MCF 10A (cell line): ENCODE measurements at regions of chr5 and their contacts with region 1.

Region 1: GRCh38 chr5:139341650-139342422 is at the start of gene PAIP2:
- DNase-seq: peak; percentile 99
- H3K4me3 Mint-ChIP-seq: peak within 1 kb of the TSS; percentile 97
- H3K27ac Mint-ChIP-seq: peak within 1 kb of the TSS; percentile 100
- H3K4me1 Mint-ChIP-seq: peaks cover 20% of the 10 kb centered on the region
- H3K27me3 Mint-ChIP-seq: no peaks in the 10 kb centered on the region
- CTCF ChIP-seq: peak; percentile 85
- total RNA-seq, gene PAIP2: 104 and 108 TPM in 2 replicates

Region 2: DNA sequence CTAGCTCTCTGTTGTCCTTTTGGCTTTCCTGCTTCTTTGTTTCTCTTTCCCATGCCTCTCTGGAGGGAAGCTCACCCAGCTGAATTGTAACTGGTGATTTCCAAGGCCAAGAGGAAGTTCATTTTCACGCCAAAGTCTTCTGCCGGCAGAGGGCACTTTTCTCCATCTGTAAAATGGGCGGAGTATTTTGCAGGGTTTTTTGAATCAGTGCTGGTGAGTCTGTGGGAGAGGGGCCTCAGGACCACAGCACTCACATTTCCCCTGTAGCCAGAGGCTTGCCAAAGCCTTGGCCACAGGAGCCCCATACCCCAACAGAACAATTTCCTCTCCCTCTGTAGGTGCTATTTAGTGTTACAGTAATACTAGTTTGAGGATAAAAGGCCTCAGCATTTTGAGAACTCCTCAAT is 90.6 kb before region 1 on chr5:
- CTCF ChIA-PET with region 1: no interaction called
- POLR2A ChIA-PET with region 1: no interaction called
- intact Hi-C with region 1: no loop called
- DNase-seq: no peak
- H3K4me3 Mint-ChIP-seq: no peak overlapping the region
- H3K27ac Mint-ChIP-seq: no peak overlapping the region
- H3K4me1 Mint-ChIP-seq: peaks cover 5% of the 10 kb centered on the region
- H3K27me3 Mint-ChIP-seq: no peaks in the 10 kb centered on the region
- CTCF ChIP-seq: peak; percentile 20

Region 3: DNA sequence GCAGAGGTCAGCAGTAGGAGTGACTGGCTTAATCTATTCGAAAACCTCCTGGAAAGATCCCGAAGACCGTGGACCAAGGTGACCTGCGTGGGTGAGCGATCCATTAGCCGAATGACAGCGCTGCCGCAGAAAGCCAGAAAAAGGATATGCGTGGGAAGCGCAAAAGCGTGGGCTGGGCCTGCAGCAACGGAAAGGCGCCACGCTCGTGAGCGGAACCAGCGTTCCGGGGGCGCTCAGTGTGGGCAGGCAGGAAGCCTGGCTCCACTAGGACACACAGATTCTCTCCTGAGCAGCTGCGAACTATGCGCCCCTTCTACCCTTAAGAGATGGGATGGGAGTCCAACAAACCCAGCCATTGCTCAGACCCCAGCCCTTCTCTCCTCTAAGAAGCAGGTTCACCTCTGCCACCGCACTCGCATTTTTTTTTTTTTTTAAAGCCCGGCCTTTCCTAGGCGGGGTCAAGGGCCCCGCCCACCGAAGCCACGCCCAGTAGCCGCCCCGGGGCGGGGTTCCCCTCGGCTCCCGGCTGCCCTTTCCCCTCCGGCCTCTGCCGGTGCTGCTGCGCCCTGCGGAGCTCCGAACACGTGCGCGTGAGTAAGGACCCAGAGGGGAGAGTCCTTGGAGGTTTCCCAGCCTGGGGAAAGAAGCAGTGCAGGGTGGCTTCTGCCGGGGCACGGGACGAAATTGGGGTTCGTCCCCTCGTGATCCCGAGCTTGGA is 68.1 kb before region 1 on chr5:
- CTCF ChIA-PET with region 1: interaction called, 3 read pairs
- POLR2A ChIA-PET with region 1: interaction called, 52 read pairs
- intact Hi-C with region 1: no loop called
- DNase-seq: peak; percentile 95
- H3K4me3 Mint-ChIP-seq: peak overlapping the region; percentile 74
- H3K27ac Mint-ChIP-seq: peak overlapping the region; percentile 65
- H3K4me1 Mint-ChIP-seq: peaks cover 49% of the 10 kb centered on the region
- H3K27me3 Mint-ChIP-seq: no peaks in the 10 kb centered on the region
- CTCF ChIP-seq: peak; percentile 10

Region 4: GRCh38 chr5:139293504-139294373 is 48.1 kb before region 1 on chr5 and contains the start of gene MATR3:
- CTCF ChIA-PET with region 1: interaction called, 8 read pairs
- POLR2A ChIA-PET with region 1: interaction called, 107 read pairs
- intact Hi-C with region 1: loop called (anchors 2 kb)
- DNase-seq: peak; percentile 98
- H3K4me3 Mint-ChIP-seq: peak within 1 kb of the TSS; percentile 94
- H3K27ac Mint-ChIP-seq: peak within 1 kb of the TSS; percentile 99
- H3K4me1 Mint-ChIP-seq: peaks cover 37% of the 10 kb centered on the region
- H3K27me3 Mint-ChIP-seq: no peaks in the 10 kb centered on the region
- CTCF ChIP-seq: no peak
- total RNA-seq, gene MATR3: 152 and 159 TPM in 2 replicates

Region 5: GRCh38 chr5:139312075-139312474 is 29.8 kb before region 1 on chr5:
- CTCF ChIA-PET with region 1: interaction called, 6 read pairs
- POLR2A ChIA-PET with region 1: interaction called, 30 read pairs
- intact Hi-C with region 1: no loop called
- DNase-seq: no peak
- H3K4me3 Mint-ChIP-seq: no peak overlapping the region
- H3K27ac Mint-ChIP-seq: peak overlapping the region; percentile 12
- H3K4me1 Mint-ChIP-seq: peaks cover 42% of the 10 kb centered on the region
- H3K27me3 Mint-ChIP-seq: no peaks in the 10 kb centered on the region
- CTCF ChIP-seq: no peak

Region 6: DNA sequence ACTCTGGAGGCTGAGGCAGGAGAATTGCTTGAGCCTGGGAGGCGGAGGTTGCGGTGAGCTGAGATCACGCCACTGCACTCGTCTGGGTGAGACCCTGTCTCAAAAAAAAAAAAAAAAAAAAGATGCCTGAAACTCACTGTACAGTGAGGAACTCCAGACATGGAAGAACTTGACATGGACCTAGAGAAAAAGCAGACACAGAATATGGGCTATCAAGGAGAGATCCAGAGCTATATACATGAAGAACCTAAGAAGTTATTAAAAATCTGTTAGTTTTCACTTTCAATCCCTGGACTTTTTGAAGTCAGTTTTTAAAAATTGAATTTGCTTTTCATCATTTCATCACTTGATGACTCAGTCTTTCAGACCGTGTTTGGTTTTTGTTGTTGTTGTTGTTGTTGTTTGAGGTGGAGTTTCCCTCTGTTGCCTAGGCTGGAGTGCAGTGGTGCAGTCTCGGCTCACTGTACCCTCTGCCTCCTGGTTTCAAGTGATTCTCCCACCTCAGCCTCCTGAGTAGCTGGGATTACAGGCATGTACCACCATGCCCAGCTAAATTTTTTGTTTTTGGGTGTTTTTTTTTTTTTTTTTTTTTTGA is 20.1 kb after region 1 on chr5:
- CTCF ChIA-PET with region 1: interaction called, 7 read pairs
- POLR2A ChIA-PET with region 1: interaction called, 16 read pairs
- intact Hi-C with region 1: no loop called
- DNase-seq: no peak
- H3K4me3 Mint-ChIP-seq: no peak overlapping the region
- H3K27ac Mint-ChIP-seq: no peak overlapping the region
- H3K4me1 Mint-ChIP-seq: peaks cover 15% of the 10 kb centered on the region
- H3K27me3 Mint-ChIP-seq: no peaks in the 10 kb centered on the region
- CTCF ChIP-seq: no peak

Region 7: GRCh38 chr5:139403787-139404483 is 62.1 kb after region 1 on chr5 and contains the start of gene SPATA24:
- CTCF ChIA-PET with region 1: interaction called, 5 read pairs
- POLR2A ChIA-PET with region 1: interaction called, 21 read pairs
- intact Hi-C with region 1: loop called (anchors 2 kb)
- DNase-seq: peak; percentile 99
- H3K4me3 Mint-ChIP-seq: peak within 1 kb of the TSS; percentile 97
- H3K27ac Mint-ChIP-seq: peak within 1 kb of the TSS; percentile 99
- H3K4me1 Mint-ChIP-seq: peaks cover 23% of the 10 kb centered on the region
- H3K27me3 Mint-ChIP-seq: no peaks in the 10 kb centered on the region
- CTCF ChIP-seq: no peak
- total RNA-seq, gene SPATA24: 9.8 and 11.6 TPM in 2 replicates